ENCODE measurements at regions of chr6 and their contacts with region 1.

Region 1: DNA sequence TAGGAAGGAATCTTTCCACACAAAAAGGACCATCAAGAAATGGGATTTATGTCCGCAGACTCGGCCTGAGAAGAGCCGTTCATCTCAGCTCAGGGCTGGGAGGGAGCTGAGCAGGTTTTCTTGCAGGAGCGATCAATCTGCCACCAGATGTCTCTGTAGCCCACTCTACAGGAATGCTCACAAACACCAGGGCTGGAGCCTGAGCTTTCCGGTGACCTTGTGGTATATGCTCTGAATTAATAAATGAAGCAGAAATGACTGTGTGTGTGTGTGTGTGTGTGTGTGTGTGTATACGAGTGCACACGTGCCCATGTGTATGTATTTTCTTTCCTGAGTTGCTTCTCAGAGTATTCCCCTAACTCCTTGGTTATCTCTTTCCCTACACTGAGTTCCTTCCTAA is 12.0 kb downstream of the CD83 start:
- DNase-seq: peak; percentile 20 to 62
- ATAC-seq: peak; percentile 80 to 93 (median 89)
- H3K4me3 ChIP-seq: no peak overlapping the region
- H3K27ac ChIP-seq: no peak overlapping the region
- H3K4me1 ChIP-seq: peaks cover 0 to 23% (median 10%) of the 10 kb centered on the region in 9 donors
- H3K27me3 ChIP-seq: no peaks in the 10 kb centered on the region
- CTCF ChIP-seq: peak; percentile 24 to 85 (median 64)

Region 2: GRCh38 chr6:14381829-14382677 is 252.5 kb after region 1 on chr6:
- intact Hi-C with region 1: no loop called
- DNase-seq: no peak
- ATAC-seq: no peak
- H3K4me3 ChIP-seq: no peak overlapping the region
- H3K27ac ChIP-seq: no peak overlapping the region
- H3K4me1 ChIP-seq: peaks cover 0 to 15% (median 0%) of the 10 kb centered on the region in 9 donors
- H3K27me3 ChIP-seq: no peaks in the 10 kb centered on the region
- CTCF ChIP-seq: no peak

Region 3: GRCh38 chr6:15441215-15441868 is 1311.8 kb after region 1 on chr6:
- intact Hi-C with region 1: loop called in 1 of 10 experiments (anchors 10 kb)
- DNase-seq: peak in 1 of 2 donors; percentile 56
- ATAC-seq: peak; percentile 51 to 75 (median 70)
- H3K4me3 ChIP-seq: no peak overlapping the region
- H3K27ac ChIP-seq: no peak overlapping the region
- H3K4me1 ChIP-seq: peaks cover 4 to 90% (median 70%) of the 10 kb centered on the region in 9 donors
- H3K27me3 ChIP-seq: no peaks in the 10 kb centered on the region
- CTCF ChIP-seq: peak; percentile 69 to 88 (median 80)

Region 4: DNA sequence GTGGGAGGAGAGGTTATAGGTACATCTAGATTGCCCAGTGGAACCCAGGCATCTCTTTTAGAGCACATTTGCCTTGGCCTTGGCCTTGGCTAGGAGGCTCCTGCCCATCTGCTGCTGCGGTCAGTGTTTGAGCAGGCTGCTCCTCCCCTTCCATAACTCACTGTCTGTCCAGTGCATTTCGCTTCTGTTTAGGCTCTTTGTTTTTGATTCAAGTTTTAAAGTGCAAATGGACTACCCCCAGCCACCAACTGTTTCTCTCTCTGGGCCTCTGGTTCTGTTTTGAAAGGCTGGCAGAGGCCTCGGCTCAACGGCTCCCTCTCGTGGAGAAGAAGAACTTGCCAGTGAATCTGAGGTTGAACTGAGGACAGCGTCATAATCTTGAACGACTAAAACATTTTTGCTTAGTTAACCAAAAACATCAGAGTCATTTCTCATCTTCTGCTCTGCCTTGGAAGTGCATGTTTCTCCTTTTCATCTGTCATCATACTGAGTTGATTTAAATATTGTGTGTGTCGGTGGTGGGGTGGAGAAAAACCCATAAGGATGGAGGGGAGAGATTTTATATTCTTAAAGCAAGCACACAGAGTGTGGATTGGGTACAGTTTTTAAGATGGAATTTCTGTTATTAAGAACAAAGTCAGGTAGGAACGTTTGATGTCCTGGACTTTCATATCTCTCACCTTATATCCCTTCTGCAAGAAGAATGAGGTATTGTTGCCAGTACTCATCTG is 1361.8 kb after region 1 on chr6:
- intact Hi-C with region 1: loop called in 3 of 10 experiments (anchors 10 kb)
- DNase-seq: peak; percentile 72 to 84
- ATAC-seq: peak in 7 of 8 donors; percentile 55 to 86 (median 78)
- H3K4me3 ChIP-seq: no peak overlapping the region
- H3K27ac ChIP-seq: peak overlapping the region in 5 of 10 donors; percentile 9 to 55 (median 36)
- H3K4me1 ChIP-seq: peaks cover 4 to 43% (median 29%) of the 10 kb centered on the region in 9 donors
- H3K27me3 ChIP-seq: no peaks in the 10 kb centered on the region
- CTCF ChIP-seq: peak; percentile 88 to 98 (median 97)

Region 5: GRCh38 chr6:15504581-15505350 is 1375.2 kb after region 1 on chr6:
- intact Hi-C with region 1: loop called in 4 of 10 experiments (anchors 10 kb)
- DNase-seq: peak; percentile 73 to 75
- ATAC-seq: peak; percentile 59 to 86 (median 80)
- H3K4me3 ChIP-seq: peak overlapping the region in 8 of 10 donors; percentile 6 to 42 (median 28)
- H3K27ac ChIP-seq: peak overlapping the region; percentile 46 to 88 (median 78)
- H3K4me1 ChIP-seq: peaks cover 15 to 64% (median 51%) of the 10 kb centered on the region in 9 donors
- H3K27me3 ChIP-seq: no peaks in the 10 kb centered on the region
- CTCF ChIP-seq: peak in 1 of 9 donors; percentile 4

Region 6: DNA sequence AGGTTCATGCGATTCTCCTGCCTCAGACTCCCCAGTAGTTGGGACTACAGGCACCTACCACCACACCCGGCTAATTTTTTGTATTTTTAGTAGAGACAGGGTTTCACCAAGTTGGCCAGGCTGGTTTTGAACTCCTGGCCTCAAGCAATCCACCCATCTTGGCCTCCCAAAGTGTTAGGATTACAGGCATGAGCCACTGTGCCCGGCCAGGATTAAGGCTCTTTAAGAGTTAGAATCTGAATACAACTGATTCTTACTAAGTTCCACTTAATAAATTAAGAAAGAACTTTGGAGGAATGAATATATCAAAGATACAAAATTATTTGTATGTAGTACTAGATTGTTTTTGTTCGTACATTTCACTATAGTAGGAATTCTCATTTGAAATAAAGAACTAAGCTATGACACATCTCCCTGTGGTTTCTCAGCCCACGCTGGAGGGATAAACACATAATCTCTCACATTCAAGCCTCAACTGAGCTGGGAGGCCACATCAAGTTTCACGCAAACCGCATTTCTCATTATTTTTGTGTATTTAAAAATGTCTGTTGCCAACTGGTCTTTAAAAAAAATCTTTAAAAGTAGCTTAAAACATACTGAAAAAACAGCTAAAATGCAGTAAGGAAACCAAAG is 1499.0 kb after region 1 on chr6:
- intact Hi-C with region 1: loop called in 7 of 10 experiments (anchors 2 to 10 kb)
- DNase-seq: no peak
- ATAC-seq: peak in 3 of 8 donors; percentile 41 to 56 (median 48)
- H3K4me3 ChIP-seq: no peak overlapping the region
- H3K27ac ChIP-seq: peak overlapping the region in 1 of 10 donors; percentile 7
- H3K4me1 ChIP-seq: peaks cover 0 to 27% (median 0%) of the 10 kb centered on the region in 9 donors
- H3K27me3 ChIP-seq: no peaks in the 10 kb centered on the region
- CTCF ChIP-seq: no peak

Measured in heart right ventricle (tissue), 16 donors.